Cardiac septum (tissue), 1 donor: ENCODE measurements at regions of chr13 and their contacts with region 1.

Region 1: GRCh38 chr13:21849323-21849722 is 178.4 kb downstream of the FGF9 start:
- DNase-seq: no peak

Region 2: DNA sequence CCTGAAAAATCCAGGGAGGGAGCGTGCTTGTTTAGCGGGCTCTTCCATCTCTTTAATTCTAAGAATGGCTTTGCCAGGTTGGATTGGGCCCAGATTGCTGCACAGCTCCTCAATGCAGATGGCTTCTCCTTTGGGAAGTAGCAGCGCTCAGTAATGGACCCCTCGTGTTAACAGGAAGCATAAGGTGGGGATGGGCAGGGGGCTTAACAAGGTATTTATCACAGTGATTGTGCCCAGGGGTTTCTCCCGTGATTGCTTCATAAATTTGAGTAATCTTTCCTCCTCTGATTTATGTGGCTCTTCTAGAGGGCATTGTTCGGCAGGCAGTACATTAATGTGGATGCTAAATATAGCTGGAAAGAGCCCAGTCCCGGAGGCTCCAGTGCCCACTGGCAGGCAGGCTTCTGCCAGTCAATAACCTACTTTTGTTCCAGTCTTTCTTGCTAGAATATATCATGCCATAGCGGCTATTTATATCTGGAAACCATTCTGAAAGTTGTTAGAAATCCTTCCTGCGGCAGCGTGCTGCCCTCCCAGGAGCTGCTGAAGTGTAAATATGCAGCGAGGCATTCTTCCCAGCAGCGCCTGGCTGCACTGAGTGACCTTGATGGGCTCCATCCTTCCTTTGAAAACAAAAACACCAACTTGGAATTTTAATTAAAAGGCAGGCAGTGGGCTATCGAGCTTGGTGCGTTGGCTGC is 113.5 kb before region 1 on chr13:
- intact Hi-C with region 1: loop called (anchors 5 kb)
- DNase-seq: no peak

Region 3: GRCh38 chr13:22278336-22278929 is 429.1 kb after region 1 on chr13:
- intact Hi-C with region 1: loop called (anchors 10 kb)
- DNase-seq: no peak